ENCODE measurements at regions of chr12 and their contacts with region 1.

Region 1: DNA sequence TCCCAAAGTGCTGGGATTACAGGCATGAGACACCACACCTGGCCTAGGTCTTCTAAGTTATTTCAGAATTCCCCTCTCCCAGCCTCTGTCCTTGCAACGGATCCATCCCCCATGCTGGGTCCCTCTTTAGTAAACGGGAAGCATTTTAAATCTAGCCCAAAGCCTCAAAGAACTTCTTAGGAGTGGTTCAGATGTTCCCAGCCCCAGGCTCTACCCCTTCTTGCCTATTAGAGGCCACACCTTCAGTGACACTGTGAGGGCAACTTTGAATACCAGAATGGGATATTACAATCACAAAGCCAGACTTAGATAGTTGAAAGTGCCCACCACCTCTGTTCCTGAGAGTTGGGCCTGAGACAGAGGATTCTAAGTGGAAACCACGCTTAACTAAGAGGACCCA is 18.1 kb upstream of the SPPL3 start:
- DNase-seq: no peak
- ATAC-seq: no peak
- H3K4me3 ChIP-seq: no peak overlapping the region
- H3K27ac ChIP-seq: no peak overlapping the region
- H3K4me1 ChIP-seq: no peaks in the 10 kb centered on the region
- H3K27me3 ChIP-seq: no peaks in the 10 kb centered on the region

Region 2: GRCh38 chr12:120797677-120798642 is 124.3 kb before region 1 on chr12:
- intact Hi-C with region 1: no loop called
- DNase-seq: no peak
- ATAC-seq: no peak
- H3K4me3 ChIP-seq: no peak overlapping the region
- H3K27ac ChIP-seq: no peak overlapping the region
- H3K4me1 ChIP-seq: peaks cover 0 to 4% of the 10 kb centered on the region in 2 donors
- H3K27me3 ChIP-seq: no peaks in the 10 kb centered on the region

Region 3: GRCh38 chr12:120886199-120887018 is 35.9 kb before region 1 on chr12:
- intact Hi-C with region 1: loop called in 1 of 2 experiments (anchors 2 kb)
- DNase-seq: no peak
- ATAC-seq: no peak
- H3K4me3 ChIP-seq: no peak overlapping the region
- H3K27ac ChIP-seq: no peak overlapping the region
- H3K4me1 ChIP-seq: no peaks in the 10 kb centered on the region
- H3K27me3 ChIP-seq: no peaks in the 10 kb centered on the region